Calu3 (cell line): ENCODE measurements at regions of chr1 and their contacts with region 1.

Region 1: DNA sequence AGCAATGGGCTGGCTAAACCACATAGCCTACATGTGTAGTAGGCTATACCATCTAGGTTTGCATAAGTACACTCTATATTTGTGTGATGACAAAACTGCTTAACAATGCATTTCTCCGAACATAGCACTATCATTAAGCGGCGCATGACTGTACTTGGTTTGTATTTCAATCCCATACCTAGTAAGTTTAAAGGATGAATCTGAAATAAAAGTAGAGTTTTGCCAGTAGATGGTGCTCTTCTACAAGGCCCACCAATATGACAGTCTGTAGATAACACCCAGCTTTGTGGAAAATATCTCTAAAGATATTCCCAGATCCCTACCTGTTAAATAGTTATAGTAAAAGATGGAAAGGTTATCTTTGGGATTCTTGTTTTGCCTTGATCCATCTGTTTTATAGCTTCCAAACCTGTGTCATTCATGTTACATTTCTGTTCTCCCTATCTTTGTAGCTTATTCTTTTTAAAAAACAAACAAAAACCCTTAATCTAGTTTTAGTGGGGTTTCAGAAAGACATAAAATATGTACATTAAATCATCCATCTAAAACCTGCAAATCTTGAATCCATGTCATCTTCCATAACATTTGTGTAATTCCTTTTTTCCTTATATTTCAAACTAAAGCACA is 33.9 kb upstream of the ASPM start:
- DNase-seq: no peak
- H3K4me3 Mint-ChIP-seq: no peak overlapping the region
- H3K27ac Mint-ChIP-seq: no peak overlapping the region
- H3K4me1 Mint-ChIP-seq: peaks cover 17% of the 10 kb centered on the region
- H3K27me3 Mint-ChIP-seq: no peaks in the 10 kb centered on the region
- CTCF ChIP-seq: peak; percentile 47

Region 2: DNA sequence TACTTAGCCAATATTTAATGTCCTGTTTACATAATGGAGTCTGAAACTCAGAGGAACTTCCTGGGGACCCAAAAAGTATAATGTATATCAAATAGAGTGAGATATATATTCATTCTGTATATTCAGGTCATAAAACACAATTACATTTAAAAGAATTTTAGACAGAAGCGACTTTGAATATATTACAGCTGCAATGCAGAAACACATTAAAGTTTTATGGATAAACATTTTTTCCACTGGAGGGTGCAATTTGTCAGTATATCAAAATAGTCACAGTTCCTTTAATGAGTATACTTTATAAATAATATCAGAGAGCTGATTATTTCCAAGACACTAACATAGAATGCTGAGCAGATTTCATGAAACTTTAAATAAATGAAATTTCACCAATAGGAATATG is 43.8 kb after region 1 on chr1:
- CTCF ChIA-PET with region 1: interaction called, 8 read pairs
- intact Hi-C with region 1: loop called (anchors 2 kb)
- DNase-seq: no peak
- H3K4me3 Mint-ChIP-seq: no peak overlapping the region
- H3K27ac Mint-ChIP-seq: no peak overlapping the region
- H3K4me1 Mint-ChIP-seq: peaks cover 12% of the 10 kb centered on the region
- H3K27me3 Mint-ChIP-seq: no peaks in the 10 kb centered on the region
- CTCF ChIP-seq: peak; percentile 49

Region 3: DNA sequence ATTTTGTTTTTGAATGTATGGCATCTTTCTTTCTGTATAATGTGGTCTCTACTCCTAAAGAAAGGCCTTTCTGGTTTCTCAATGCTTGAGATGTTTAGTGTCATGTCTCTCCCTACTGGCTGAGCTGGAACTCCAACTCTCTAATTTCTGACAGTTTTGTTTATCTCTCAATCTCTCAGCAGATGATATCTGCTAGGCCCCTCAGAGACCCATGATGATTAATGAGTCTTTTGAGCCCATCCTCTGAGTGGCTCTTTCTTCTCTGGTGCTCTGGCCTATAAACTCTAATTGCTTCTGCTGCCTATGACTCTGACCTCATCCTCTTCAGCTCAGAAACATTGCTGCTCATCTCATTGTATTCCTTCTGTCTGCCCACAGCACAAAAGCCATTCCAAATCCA is 134.3 kb after region 1 on chr1:
- CTCF ChIA-PET with region 1: no interaction called
- intact Hi-C with region 1: loop called (anchors 1 kb)
- DNase-seq: no peak
- H3K4me3 Mint-ChIP-seq: no peak overlapping the region
- H3K27ac Mint-ChIP-seq: no peak overlapping the region
- H3K4me1 Mint-ChIP-seq: peaks cover 22% of the 10 kb centered on the region
- H3K27me3 Mint-ChIP-seq: no peaks in the 10 kb centered on the region
- CTCF ChIP-seq: no peak

Region 4: DNA sequence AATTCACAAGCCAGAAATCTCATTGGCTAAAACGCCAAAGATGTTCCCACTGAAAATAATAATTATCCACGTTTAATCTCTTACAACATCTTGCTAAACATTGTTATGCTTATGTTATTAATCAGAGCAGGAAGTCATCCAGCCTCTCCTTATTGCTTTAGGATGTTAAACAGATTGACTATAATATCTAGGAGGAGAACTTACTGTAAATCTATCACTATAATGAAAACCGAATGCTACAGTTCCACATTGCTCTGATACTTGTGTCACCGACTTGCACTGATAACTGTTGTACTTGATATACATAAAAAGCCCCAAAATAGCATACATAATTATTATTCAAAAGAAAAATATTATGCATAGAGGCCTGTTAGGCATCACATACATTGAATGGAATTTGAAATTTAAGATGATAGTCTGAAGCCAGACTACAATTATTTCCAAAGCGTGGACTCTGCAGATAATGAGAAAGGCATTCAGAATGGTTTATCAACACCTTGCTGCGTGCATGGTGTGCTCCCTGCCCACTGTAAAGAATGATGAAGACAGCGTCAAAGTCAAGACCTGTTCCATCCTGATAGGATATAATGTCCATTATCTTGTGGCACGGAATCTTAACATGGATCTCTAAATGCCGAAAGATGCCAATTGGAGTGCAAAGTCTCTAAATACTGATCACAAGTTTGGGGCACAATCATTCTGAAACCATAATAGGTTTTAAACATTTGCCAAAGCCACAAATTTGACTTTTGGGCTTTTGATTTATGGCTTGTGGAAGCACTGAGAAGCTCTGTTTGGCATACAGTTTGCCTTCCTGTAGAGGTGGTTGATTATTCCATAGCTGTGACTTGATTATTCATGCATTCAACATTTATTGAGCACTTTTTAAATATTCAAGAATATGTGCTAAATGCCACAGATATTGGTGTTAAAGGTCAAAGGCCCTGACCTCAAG is 159.0 kb after region 1 on chr1:
- CTCF ChIA-PET with region 1: no interaction called
- intact Hi-C with region 1: loop called (anchors 1 kb)
- DNase-seq: no peak
- H3K4me3 Mint-ChIP-seq: no peak overlapping the region
- H3K27ac Mint-ChIP-seq: no peak overlapping the region
- H3K4me1 Mint-ChIP-seq: peaks cover 10% of the 10 kb centered on the region
- H3K27me3 Mint-ChIP-seq: no peaks in the 10 kb centered on the region
- CTCF ChIP-seq: no peak